Activated T-helper 2 cell treated with anti-CD3 and anti-CD28 coated beads, Interferon-gamma antibody, Interleukin-2, Interleukin-4, amounts not matched to agents 10 μg/mL and 5 μg/mL and 100 μg/mL, durations not matched to agents 14 hours and 24 hours and 36 hours (primary cell): ENCODE measurements at regions of chr10 and their contacts with region 1.

Region 1: DNA sequence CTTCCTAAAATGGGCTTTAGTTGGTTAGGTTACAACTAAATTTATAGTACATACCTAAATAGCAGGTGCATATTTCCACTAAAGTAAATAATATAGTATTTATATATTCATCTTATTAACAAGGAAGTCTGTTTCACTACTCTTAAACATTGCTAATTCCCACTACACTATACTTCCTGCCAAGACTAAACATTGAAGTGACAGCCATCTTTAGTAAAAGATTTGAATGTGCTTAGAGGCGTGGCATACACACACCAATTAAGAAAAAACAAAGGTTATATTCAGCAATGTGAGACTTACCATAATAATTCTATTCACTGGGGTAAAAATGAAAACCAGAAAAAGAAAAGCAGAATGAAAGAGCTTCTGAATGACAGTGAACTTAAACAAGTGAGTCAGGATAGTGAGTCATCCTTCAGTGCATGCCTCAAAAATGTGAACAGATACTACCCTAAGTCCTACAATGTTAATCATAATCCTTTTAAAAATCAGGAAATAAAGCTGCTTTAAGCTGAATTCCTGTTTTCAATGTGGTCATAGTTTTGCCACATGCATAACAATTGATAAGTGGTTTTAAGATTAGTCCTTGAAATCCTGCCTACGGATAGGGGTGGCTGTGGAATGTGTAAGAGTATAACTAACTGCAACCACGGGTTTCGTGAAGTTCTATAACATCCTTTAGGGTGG is 59.4 kb downstream of the USP6NL start:
- DNase-seq: no peak
- H3K4me3 Mint-ChIP-seq: no peak overlapping the region
- H3K27ac Mint-ChIP-seq: no peak overlapping the region
- H3K4me1 Mint-ChIP-seq: peaks cover 23% of the 10 kb centered on the region
- H3K27me3 Mint-ChIP-seq: peaks cover 10% of the 10 kb centered on the region

Region 2: DNA sequence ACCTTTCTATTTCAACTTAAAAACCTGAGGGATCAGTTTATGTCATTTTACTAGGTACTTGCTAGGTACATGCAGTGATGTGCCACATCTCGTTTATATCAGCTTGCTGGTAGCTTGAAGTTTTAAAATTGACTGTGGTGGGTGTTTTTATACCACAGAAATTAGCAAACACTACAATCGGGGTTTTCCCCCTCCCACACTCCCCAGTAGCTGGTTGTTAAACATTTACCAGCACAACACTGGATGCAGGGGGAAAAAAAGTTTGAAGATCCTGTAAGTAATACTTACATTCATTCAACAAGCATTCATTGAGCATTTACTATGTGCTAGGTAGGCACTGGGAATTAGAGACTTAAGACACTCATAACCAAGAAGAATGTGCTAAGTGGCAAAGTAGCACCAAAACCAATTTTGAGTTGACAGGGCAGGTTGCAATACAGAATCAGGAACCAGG is 26.8 kb after region 1 on chr10:
- intact Hi-C with region 1: loop called (anchors 2 kb)
- DNase-seq: no peak
- H3K4me3 Mint-ChIP-seq: no peak overlapping the region
- H3K27ac Mint-ChIP-seq: no peak overlapping the region
- H3K4me1 Mint-ChIP-seq: peaks cover 17% of the 10 kb centered on the region
- H3K27me3 Mint-ChIP-seq: peaks cover 33% of the 10 kb centered on the region